ENCODE measurements at regions of chr9 and their contacts with region 1.

Region 1: DNA sequence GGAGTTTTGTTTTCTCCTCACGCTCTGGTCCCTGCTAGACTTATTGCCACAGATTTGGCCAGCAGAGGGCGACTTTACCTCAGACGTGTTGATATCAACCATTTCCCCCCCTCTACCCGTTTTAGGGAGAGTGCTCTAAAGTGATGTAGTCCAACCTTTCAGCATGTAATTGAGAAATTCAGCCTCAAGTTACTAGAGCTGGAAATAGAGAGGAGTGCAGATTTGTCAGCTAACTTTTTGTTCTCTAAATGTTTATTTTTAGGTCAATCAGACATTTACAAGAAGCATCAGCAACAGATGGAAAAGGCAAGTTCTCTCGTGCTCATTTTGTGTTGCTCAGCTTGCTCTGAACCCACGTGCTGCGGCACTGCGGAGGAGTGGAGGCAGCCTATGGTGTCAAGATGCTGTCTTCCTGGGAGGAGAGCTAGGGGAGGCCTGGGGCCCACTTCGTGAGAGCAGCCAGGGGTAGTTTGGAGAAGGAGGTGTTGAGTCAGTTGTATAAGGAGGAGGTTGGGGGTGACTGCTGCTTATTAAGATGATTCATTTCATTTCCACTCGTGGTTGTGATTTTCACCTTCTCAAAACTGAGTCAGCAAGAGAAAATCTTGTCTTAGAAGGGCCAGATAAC is 53.6 kb downstream of the GPR107 start:
- DNase-seq: peak; percentile 64
- H3K4me3 Mint-ChIP-seq: peak overlapping the region; percentile 28
- H3K27ac Mint-ChIP-seq: peak overlapping the region; percentile 71
- H3K4me1 Mint-ChIP-seq: peaks cover 32% of the 10 kb centered on the region
- H3K27me3 Mint-ChIP-seq: no peaks in the 10 kb centered on the region

Region 2: GRCh38 chr9:130053504-130054324 is 53.6 kb before region 1 on chr9 and contains the start of gene GPR107:
- intact Hi-C with region 1: no loop called
- DNase-seq: peak; percentile 77
- H3K4me3 Mint-ChIP-seq: peak within 1 kb of the TSS; percentile 96
- H3K27ac Mint-ChIP-seq: peak within 1 kb of the TSS; percentile 92
- H3K4me1 Mint-ChIP-seq: peaks cover 34% of the 10 kb centered on the region
- H3K27me3 Mint-ChIP-seq: no peaks in the 10 kb centered on the region
- total RNA-seq, gene GPR107: 23.1 and 24.9 TPM in 2 replicates

Region 3: DNA sequence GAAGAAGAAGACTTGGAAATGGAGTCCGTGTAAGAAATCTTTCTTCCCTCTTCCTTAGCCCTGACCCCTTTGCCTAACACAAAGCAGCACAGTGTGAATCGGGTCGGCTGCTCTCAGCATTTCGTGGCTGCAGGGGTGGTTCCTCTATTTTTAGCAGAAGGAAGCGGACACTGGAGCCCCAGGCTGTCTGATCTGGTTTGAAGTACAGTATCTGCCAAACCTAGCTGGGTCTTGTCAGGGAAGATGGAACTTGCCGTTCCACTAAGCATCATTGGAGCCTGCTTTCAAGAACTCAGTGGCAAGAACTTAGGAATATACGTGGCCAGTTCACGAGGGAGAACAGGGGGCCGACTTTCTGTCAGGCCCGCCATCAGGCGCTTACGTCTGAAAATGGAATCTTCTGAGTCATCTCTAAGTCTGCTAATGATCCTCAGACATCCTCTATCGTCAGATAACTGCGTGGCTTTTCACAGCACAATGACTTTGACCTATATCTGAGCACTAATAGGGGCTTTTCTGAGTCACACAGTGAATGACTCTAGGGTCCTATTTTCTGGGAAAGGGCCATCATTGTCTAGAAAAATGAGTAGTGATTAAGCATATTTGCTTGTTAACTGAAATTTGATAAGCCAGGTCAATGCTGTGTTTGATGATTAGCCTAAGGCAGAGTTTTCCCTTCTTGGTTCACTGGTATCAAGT is 21.5 kb after region 1 on chr9:
- intact Hi-C with region 1: loop called (anchors 1 kb)
- DNase-seq: peak; percentile 29
- H3K4me3 Mint-ChIP-seq: peak overlapping the region; percentile 80
- H3K27ac Mint-ChIP-seq: peak overlapping the region; percentile 95
- H3K4me1 Mint-ChIP-seq: peaks cover 46% of the 10 kb centered on the region
- H3K27me3 Mint-ChIP-seq: no peaks in the 10 kb centered on the region

Region 4: GRCh38 chr9:130235897-130236668 is 128.7 kb after region 1 on chr9:
- intact Hi-C with region 1: loop called (anchors 1 kb)
- DNase-seq: peak; percentile 59
- H3K4me3 Mint-ChIP-seq: no peak overlapping the region
- H3K27ac Mint-ChIP-seq: no peak overlapping the region
- H3K4me1 Mint-ChIP-seq: peaks cover 20% of the 10 kb centered on the region
- H3K27me3 Mint-ChIP-seq: peaks cover 2% of the 10 kb centered on the region

Region 5: DNA sequence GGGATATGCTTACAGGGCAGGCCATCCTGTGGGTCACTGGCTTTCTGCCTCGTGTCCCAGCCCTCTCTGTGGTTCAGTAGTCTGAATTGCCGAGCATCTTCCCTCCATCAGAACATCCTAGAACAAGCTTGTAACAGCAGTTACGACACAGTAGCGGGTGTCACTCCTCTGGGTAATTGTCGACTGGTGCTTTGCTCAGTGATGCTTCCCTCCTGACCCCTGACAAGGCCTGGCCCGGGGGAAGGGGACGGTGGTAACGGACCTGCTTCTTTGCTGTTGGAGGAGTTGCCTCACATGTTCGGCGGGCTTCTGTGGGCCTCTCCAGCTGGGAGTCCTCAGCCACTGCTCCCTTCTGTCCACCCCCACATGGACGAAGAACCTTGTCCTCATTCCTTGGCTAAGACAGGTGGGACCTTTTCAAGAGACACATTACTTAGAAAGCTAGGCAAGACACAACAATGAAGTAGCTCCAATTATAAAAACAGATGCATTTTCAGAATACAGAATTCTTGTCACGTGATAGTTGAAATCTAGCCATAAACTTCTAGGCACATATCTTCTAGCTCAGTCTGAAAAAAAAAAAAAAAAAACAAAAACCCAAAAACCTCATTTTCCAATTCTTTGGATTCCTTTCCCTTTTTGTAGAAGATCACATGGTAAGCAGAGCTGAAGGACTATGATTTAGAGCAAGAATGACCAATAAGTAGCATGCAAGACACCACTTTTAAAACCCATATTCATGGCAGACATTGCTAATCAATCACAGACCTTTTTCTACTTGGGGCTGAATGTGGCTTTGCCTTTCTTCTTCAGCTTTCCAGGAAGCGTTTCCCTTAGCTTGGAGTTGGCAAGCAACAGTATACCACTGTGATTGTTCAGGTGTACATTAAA is 183.2 kb after region 1 on chr9:
- intact Hi-C with region 1: no loop called
- DNase-seq: no peak
- H3K4me3 Mint-ChIP-seq: no peak overlapping the region
- H3K27ac Mint-ChIP-seq: no peak overlapping the region
- H3K4me1 Mint-ChIP-seq: no peaks in the 10 kb centered on the region
- H3K27me3 Mint-ChIP-seq: peaks cover 9% of the 10 kb centered on the region

Region 6: GRCh38 chr9:130343445-130343918 is 236.1 kb after region 1 on chr9:
- intact Hi-C with region 1: loop called (anchors 2 kb)
- DNase-seq: no peak
- H3K4me3 Mint-ChIP-seq: no peak overlapping the region
- H3K27ac Mint-ChIP-seq: no peak overlapping the region
- H3K4me1 Mint-ChIP-seq: no peaks in the 10 kb centered on the region
- H3K27me3 Mint-ChIP-seq: no peaks in the 10 kb centered on the region

Region 7: DNA sequence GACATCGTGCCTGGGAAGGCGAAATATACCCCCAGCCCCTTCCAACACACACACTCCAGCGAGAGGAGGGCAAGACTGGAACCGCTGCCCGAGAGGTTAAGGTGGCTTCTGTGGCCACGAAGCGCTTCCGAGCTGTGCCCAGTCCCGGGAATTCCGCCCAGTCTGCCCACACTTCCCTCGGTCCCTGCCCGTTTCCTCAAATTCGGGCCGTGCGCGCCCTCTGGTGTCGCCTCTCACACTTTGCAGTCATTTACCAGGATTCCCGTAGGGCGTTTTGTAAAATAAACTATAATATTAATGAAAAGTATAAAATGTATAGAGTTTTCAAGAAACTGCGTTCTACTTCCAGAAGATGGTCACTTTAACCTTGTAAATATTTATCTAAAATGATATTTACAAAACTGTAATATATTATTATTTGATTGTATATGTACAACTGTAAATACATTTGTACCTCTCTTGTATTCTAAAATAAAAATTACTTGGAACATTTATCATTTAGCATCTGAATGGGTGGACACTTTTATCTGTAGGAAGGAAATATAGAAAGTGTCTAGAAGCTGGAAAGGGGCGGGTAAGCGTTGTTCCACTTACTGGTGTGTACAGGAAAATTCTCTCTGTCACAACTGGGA is 575.3 kb after region 1 on chr9:
- intact Hi-C with region 1: loop called (anchors 5 kb)
- DNase-seq: peak; percentile 24
- H3K4me3 Mint-ChIP-seq: peak overlapping the region; percentile 87
- H3K27ac Mint-ChIP-seq: peak overlapping the region; percentile 76
- H3K4me1 Mint-ChIP-seq: peaks cover 10% of the 10 kb centered on the region
- H3K27me3 Mint-ChIP-seq: peaks cover 28% of the 10 kb centered on the region